Activated T-helper 2 cell treated with anti-CD3 and anti-CD28 coated beads, Interferon-gamma antibody, Interleukin-2, Interleukin-4, amounts not matched to agents 10 μg/mL and 5 μg/mL and 100 μg/mL, durations not matched to agents 14 hours and 24 hours and 36 hours (primary cell): ENCODE measurements at regions of chr2 and their contacts with region 1.

Region 1: GRCh38 chr2:211035548-211036185 is 479.3 kb downstream of the CPS1 start:
- DNase-seq: no peak
- H3K4me3 Mint-ChIP-seq: no peak overlapping the region
- H3K27ac Mint-ChIP-seq: no peak overlapping the region
- H3K4me1 Mint-ChIP-seq: no peaks in the 10 kb centered on the region
- H3K27me3 Mint-ChIP-seq: no peaks in the 10 kb centered on the region

Region 2: GRCh38 chr2:210617732-210618330 is 417.8 kb before region 1 on chr2:
- intact Hi-C with region 1: loop called (anchors 2 kb)
- DNase-seq: no peak
- H3K4me3 Mint-ChIP-seq: no peak overlapping the region
- H3K27ac Mint-ChIP-seq: no peak overlapping the region
- H3K4me1 Mint-ChIP-seq: no peaks in the 10 kb centered on the region
- H3K27me3 Mint-ChIP-seq: no peaks in the 10 kb centered on the region